Mammary epithelial cell (primary cell): ENCODE measurements at regions of chr2 and their contacts with region 1.

Region 1: GRCh38 chr2:62787386-62787785 is 81.9 kb downstream of the EHBP1 start:
- DNase-seq: peak; percentile 20
- H3K4me3 ChIP-seq: no peak overlapping the region
- H3K27ac ChIP-seq: no peak overlapping the region
- H3K4me1 ChIP-seq: peaks cover 8% of the 10 kb centered on the region
- H3K27me3 ChIP-seq: no peaks in the 10 kb centered on the region
- CTCF ChIP-seq: peak; percentile 21 to 51

Region 2: DNA sequence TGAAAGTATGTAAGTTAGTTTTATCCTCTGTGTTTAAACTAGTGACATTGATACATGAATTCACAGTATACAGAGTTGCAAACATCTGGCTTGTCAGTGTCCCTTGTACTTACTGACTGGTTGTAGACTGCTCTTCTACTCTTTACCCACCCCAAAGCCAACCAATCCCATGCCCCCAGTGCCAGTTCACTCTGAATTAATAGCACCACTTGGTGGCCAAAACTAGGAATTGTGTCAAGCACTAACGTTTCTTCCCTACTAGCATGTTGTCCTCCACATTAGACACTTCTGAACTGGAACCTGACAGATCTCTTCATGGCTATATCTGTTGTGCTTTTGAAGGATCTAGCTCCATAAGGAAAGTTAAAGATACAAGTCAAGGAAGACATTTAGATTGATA is 236.1 kb after region 1 on chr2:
- CTCF ChIA-PET with region 1: no interaction called
- dilution Hi-C with region 1: no loop called
- in situ Hi-C with region 1: no loop called
- intact Hi-C with region 1: loop called (anchors 1 kb)
- DNase-seq: peak; percentile 25
- H3K4me3 ChIP-seq: no peak overlapping the region
- H3K27ac ChIP-seq: no peak overlapping the region
- H3K4me1 ChIP-seq: no peaks in the 10 kb centered on the region
- H3K27me3 ChIP-seq: no peaks in the 10 kb centered on the region
- CTCF ChIP-seq: peak; percentile 34 to 40

Region 3: DNA sequence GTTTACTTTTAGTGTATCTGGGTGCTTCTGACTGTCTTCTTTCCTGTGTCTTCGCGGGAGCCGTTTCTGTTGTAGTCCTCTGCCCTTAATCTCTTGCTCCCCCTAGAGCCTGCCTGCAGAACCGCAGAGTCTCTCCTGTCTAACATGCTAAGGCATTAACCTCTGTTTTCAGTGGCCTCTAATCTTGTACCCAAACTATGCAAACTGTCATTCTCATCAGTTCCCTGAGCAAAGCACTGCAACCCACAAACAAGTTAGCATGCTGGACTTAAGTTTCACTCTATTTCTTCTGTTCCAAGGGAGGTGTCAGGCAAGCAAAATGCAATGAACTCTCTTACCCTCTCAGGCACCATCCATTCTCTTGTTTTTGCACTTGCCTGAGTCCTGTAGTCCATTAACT is 401.6 kb after region 1 on chr2:
- CTCF ChIA-PET with region 1: no interaction called
- dilution Hi-C with region 1: no loop called
- in situ Hi-C with region 1: no loop called
- intact Hi-C with region 1: loop called (anchors 1 kb)
- DNase-seq: peak; percentile 41
- H3K4me3 ChIP-seq: no peak overlapping the region
- H3K27ac ChIP-seq: no peak overlapping the region
- H3K4me1 ChIP-seq: no peaks in the 10 kb centered on the region
- H3K27me3 ChIP-seq: no peaks in the 10 kb centered on the region
- CTCF ChIP-seq: peak; percentile 95 to 97

Region 4: DNA sequence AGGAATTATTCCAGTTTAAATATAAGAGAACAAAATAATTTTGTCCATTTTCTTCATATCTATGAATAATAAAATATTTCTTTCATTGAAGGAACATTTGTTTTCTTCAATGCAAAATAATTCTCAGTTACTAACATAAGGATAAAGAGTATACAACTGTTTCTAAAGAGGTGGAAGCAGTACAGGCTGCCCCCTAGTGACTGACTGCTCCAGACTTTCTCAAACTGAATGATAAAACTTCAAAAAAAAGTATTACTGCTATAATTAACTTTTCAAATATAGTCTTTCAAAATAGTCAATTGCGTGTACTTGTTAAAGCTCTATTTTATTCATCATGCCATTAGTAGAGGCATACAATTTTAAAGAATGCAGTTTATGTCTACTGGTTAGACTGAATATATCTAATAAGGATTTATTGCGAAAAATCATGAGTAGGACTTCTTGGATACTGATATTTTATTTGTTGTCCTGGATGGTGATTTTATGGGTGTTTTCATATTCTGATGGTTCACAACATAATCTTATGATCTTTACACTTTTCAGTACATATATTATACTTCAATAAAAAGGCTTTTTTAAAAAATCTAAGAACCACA is 700.8 kb after region 1 on chr2:
- CTCF ChIA-PET with region 1: no interaction called
- dilution Hi-C with region 1: no loop called
- in situ Hi-C with region 1: no loop called
- intact Hi-C with region 1: loop called (anchors 5 kb)
- DNase-seq: peak; percentile 6
- H3K4me3 ChIP-seq: no peak overlapping the region
- H3K27ac ChIP-seq: no peak overlapping the region
- H3K4me1 ChIP-seq: no peaks in the 10 kb centered on the region
- H3K27me3 ChIP-seq: no peaks in the 10 kb centered on the region
- CTCF ChIP-seq: peak; percentile 68 to 75